Activated naive CD4-positive, alpha-beta T cell treated with anti-CD3 and anti-CD28 coated beads for 36 hours (primary cell): ENCODE measurements at regions of chr15 and their contacts with region 1.

Region 1: DNA sequence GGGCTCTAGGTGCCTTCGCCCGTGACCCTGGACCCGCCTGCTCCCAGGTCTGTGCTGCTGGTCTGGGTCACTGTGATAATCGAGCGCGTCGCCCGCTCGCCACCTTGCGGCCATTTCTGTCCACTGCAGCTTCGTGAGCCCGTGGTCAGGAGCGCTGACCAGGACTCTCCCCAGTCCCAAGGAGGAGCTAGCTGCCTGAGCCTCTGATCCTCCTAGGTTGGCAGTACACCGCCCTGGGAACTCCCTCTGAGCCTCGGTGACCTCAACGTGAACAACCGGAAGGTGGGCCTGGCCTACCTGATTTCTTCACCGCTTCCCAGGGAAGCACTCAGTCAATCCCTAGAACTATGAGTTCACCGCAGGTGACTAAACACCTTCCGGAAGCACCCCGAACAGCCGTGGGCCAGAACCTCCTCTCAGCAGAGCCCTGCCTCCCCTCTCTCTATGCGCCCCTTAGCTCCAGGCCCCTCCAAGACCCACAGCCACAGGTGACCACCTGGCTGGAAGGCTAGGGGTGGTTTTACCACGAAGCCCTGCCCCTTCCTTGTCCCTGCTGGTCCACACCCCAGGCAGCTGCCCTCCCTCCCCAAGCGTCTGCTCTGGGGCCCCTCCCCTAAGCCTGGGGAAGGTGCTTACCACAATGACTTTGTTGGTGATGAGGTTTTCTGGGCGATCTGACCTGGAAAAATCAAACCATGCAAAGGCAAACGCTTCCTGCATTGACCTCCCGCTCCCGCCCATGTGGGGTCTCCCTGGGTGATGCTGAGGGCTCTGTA is 9.7 kb downstream of the PLA2G4D start:
- DNase-seq: peak; percentile 57
- H3K4me3 Mint-ChIP-seq: no peak overlapping the region
- H3K27ac Mint-ChIP-seq: no peak overlapping the region
- H3K4me1 Mint-ChIP-seq: peaks cover 4% of the 10 kb centered on the region
- H3K27me3 Mint-ChIP-seq: peaks cover 6% of the 10 kb centered on the region

Region 2: GRCh38 chr15:42073418-42073817 is 11.2 kb before region 1 on chr15:
- CTCF ChIA-PET with region 1: interaction called, 15 read pairs
- intact Hi-C with region 1: no loop called
- DNase-seq: no peak
- H3K4me3 Mint-ChIP-seq: no peak overlapping the region
- H3K27ac Mint-ChIP-seq: no peak overlapping the region
- H3K4me1 Mint-ChIP-seq: no peaks in the 10 kb centered on the region
- H3K27me3 Mint-ChIP-seq: no peaks in the 10 kb centered on the region

Region 3: GRCh38 chr15:42107473-42107872 is 22.8 kb after region 1 on chr15:
- CTCF ChIA-PET with region 1: interaction called, 12 read pairs
- intact Hi-C with region 1: no loop called
- DNase-seq: peak; percentile 89
- H3K4me3 Mint-ChIP-seq: no peak overlapping the region
- H3K27ac Mint-ChIP-seq: peak overlapping the region; percentile 22
- H3K4me1 Mint-ChIP-seq: peaks cover 22% of the 10 kb centered on the region
- H3K27me3 Mint-ChIP-seq: peaks cover 16% of the 10 kb centered on the region

Region 4: DNA sequence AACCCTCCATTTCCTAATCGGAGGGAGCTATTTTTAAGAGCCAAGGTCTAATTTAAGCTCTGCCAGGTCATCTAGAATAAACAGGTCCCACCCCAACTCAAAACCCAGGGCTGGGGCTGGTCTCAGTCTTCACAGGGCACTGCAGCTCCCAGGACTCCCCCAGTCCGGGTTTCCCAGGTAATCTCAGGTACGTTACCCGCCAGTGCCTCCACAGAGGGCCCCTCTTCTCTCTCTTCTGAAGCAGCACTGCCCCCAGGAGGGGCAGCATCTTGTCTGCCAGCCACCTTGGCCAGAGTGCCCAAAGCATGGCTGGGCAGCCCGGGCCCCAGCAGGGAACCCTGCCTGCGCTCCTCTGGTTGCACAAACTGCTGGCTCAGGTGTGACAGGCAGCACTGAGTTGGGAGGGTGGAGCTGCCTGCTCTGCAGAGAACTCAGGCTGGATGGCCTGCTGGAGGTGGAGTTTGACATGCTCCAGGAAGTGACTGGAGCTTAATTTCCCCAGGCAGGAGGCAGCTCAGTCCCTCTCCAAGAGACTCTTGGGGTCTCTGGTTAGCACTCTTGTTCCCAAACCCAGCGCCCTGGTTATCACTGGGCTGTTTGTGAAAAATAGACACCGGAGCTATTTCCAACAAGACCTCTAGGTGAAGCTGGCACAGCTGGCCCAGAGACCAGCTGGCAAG is 71.7 kb after region 1 on chr15 and contains the start of gene PLA2G4F:
- CTCF ChIA-PET with region 1: no interaction called
- intact Hi-C with region 1: no loop called
- DNase-seq: no peak
- H3K4me3 Mint-ChIP-seq: no peak within 1 kb of the TSS
- H3K27ac Mint-ChIP-seq: no peak within 1 kb of the TSS
- H3K4me1 Mint-ChIP-seq: no peaks in the 10 kb centered on the region
- H3K27me3 Mint-ChIP-seq: no peaks in the 10 kb centered on the region
- total RNA-seq, gene PLA2G4F: not detected

Region 5: GRCh38 chr15:42385206-42385979 is 300.7 kb after region 1 on chr15:
- CTCF ChIA-PET with region 1: no interaction called
- intact Hi-C with region 1: loop called (anchors 10 kb)
- DNase-seq: peak; percentile 64
- H3K4me3 Mint-ChIP-seq: no peak overlapping the region
- H3K27ac Mint-ChIP-seq: no peak overlapping the region
- H3K4me1 Mint-ChIP-seq: no peaks in the 10 kb centered on the region
- H3K27me3 Mint-ChIP-seq: no peaks in the 10 kb centered on the region